ENCODE measurements at regions of chrX and their contacts with region 1.

Region 1: DNA sequence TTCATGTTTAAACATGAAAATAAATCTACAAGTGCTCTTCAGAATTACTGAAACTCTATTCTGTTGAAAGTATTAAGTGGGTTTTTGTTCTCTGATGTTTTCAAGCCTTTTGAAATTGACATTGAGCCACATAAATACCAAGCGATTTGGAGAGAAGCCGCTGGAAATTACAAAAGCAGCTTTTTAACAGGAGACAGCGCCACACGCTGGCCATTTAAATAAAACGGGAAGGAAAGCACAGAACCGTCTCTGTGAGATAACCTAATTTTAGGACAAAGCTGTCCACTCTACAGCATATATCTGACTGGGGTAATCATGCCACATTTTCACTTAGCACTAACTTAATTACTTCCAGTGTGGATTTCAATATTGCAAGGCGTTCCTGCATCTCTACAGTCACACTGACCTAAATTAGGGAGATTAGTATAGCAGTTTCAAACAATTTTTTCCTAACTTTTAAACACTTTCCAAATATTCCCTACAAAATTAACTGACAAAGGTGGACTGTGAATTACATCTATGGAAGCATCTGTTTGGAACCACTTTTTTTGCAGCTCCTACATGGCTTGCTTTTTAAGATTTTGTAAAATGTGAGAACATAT is 6.8 kb upstream of the ANOS1 start:
- DNase-seq: no peak
- H3K4me3 ChIP-seq: no peak overlapping the region
- H3K27ac ChIP-seq: no peak overlapping the region
- H3K4me1 ChIP-seq: no peaks in the 10 kb centered on the region
- H3K27me3 ChIP-seq: no peaks in the 10 kb centered on the region
- CTCF ChIP-seq: peak; percentile 21 to 60 (median 58)
- POLR2A ChIP-seq: no peak

Region 2: DNA sequence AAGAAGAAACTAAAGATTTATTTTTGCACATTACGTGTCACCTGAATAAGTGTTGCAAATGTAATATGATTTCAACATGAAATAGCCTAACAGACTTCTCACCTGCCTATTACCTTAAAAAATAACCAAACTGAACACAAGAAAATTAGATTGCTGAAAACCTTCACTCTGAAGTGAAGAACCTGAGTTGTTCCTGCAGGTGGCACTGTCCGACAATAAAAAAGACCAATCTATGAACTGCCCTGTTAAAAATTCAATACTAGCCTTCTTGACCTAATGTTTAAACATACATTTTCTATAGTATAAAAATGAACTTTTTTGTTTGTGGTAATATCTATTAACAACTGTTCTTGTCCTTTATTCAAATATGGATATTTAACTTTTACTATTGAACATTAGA is 742.3 kb before region 1 on chrX:
- intact Hi-C with region 1: loop called (anchors 5 kb)
- DNase-seq: no peak
- H3K4me3 ChIP-seq: no peak overlapping the region
- H3K27ac ChIP-seq: no peak overlapping the region
- H3K4me1 ChIP-seq: no peaks in the 10 kb centered on the region
- H3K27me3 ChIP-seq: no peaks in the 10 kb centered on the region
- CTCF ChIP-seq: peak in 5 of 6 experiments; percentile 52 to 57 (median 53)
- POLR2A ChIP-seq: no peak

Region 3: GRCh38 chrX:8364369-8365141 is 374.1 kb before region 1 on chrX:
- intact Hi-C with region 1: loop called (anchors 10 kb)
- DNase-seq: no peak
- H3K4me3 ChIP-seq: no peak overlapping the region
- H3K27ac ChIP-seq: no peak overlapping the region
- H3K4me1 ChIP-seq: no peaks in the 10 kb centered on the region
- H3K27me3 ChIP-seq: no peaks in the 10 kb centered on the region
- CTCF ChIP-seq: peak in 4 of 6 experiments; percentile 14 to 52 (median 28)
- POLR2A ChIP-seq: no peak

Region 4: DNA sequence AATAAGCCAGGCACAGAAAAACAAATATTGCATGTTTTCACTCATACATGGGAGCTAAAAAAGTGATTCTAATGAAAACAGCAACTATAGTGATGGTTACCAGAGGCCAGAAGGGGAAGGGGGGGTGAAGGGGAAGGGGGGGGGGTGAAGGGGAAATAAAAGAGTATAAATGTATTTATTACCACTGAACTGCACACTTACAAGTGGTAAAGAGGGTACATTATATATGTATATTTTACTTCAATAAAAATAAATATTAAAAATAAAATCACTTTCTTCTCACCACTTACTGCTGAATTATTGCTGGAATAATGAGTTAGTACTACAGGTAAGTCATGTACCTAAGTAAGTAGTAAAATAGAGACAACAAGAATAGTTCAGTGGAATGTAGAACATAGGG is 276.2 kb before region 1 on chrX:
- intact Hi-C with region 1: no loop called
- DNase-seq: no peak
- H3K4me3 ChIP-seq: no peak overlapping the region
- H3K27ac ChIP-seq: no peak overlapping the region
- H3K4me1 ChIP-seq: no peaks in the 10 kb centered on the region
- H3K27me3 ChIP-seq: no peaks in the 10 kb centered on the region
- CTCF ChIP-seq: no peak
- POLR2A ChIP-seq: no peak

Region 5: DNA sequence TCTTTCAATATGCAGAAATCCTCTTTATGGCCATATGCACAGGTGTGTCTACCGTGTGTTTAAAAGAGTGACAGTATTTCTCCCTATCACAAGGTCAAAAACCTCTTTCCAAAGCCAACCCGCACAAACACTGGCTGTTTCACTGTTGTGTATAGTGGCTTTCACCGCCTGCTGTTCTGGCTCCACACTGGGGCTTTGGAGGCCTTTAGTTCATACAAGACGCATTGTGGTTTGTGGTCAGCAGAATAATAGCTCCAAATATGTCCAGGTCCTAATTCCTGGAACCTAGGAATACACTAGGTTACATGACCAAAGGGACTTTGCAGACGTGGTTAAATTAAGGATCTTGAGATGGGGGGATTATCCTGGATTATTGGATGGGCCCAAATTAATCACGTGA is 103.2 kb after region 1 on chrX:
- intact Hi-C with region 1: no loop called
- DNase-seq: no peak
- H3K4me3 ChIP-seq: no peak overlapping the region
- H3K27ac ChIP-seq: no peak overlapping the region
- H3K4me1 ChIP-seq: no peaks in the 10 kb centered on the region
- H3K27me3 ChIP-seq: no peaks in the 10 kb centered on the region
- CTCF ChIP-seq: no peak
- POLR2A ChIP-seq: no peak